Naive thymus-derived CD8-positive, alpha-beta T cell (primary cell): ENCODE measurements at regions of chr12 and their contacts with region 1.

Region 1: GRCh38 chr12:51270067-51270970 is at the start of gene SMAGP:
- DNase-seq: peak in 9 of 10 donors; percentile 25 to 71 (median 47)
- ATAC-seq: peak; percentile 60 to 62
- H3K4me3 Mint-ChIP-seq: peak within 1 kb of the TSS; percentile 87 to 96 (median 94)
- H3K27ac Mint-ChIP-seq: peak within 1 kb of the TSS; percentile 78 to 95 (median 92)
- H3K4me1 Mint-ChIP-seq: peaks cover 19 to 40% (median 30%) of the 10 kb centered on the region in 4 donors
- H3K27me3 Mint-ChIP-seq: no peaks in the 10 kb centered on the region
- polyA plus RNA-seq, gene SMAGP: 15.1 to 18.5 (median 15.6) TPM

Region 2: GRCh38 chr12:50822082-50822481 is 448.2 kb before region 1 on chr12:
- POLR2A ChIA-PET with region 1: no interaction called
- DNase-seq: no peak
- ATAC-seq: no peak
- H3K4me3 Mint-ChIP-seq: no peak overlapping the region
- H3K27ac Mint-ChIP-seq: peak overlapping the region in 2 of 10 donors; percentile 31 to 86
- H3K4me1 Mint-ChIP-seq: peaks cover 0 to 9% (median 8%) of the 10 kb centered on the region in 4 donors
- H3K27me3 Mint-ChIP-seq: no peaks in the 10 kb centered on the region

Region 3: GRCh38 chr12:51341259-51342007 is 71.1 kb after region 1 on chr12:
- POLR2A ChIA-PET with region 1: interaction called, 19 read pairs
- DNase-seq: peak; percentile 33 to 86 (median 69)
- ATAC-seq: peak; percentile 93 to 98
- H3K4me3 Mint-ChIP-seq: peak overlapping the region; percentile 23 to 81 (median 59)
- H3K27ac Mint-ChIP-seq: peak overlapping the region in 9 of 10 donors; percentile 5 to 90 (median 83)
- H3K4me1 Mint-ChIP-seq: peaks cover 11 to 35% (median 18%) of the 10 kb centered on the region in 4 donors
- H3K27me3 Mint-ChIP-seq: no peaks in the 10 kb centered on the region

Region 4: DNA sequence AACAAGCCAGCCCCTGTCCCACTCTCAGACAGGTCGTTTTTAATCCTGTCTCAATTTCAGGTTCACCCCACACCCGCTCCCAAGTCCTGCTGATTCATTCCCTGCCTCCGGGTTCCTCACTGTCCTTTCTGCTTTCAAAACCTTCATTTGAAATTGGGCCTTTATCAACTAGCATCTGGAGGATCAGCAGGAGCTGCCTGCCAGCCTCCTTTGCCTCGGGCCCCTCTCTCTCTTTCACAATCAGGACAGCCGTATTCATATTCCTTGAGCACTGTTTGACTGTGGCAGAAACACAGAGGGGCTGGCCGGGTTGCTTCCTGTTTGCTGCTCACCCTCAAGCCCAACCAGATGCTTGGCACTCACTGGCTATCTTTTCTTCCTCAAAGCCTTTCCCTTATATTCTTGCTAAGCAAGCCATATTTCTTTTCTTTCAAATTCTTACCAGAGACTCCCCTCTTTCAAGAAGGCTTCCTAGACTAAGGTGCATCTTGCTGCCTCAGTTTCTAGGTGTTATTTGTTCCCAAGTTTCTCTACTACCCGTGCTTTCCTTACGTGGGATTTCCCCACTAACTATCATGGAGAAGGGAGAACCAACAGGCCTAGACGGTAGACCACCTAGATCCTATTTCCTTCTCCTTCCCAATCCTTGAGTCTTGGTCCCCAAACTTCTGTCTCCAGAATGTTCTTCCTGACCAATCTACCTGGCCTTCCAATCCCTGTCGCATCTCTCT is 117.9 kb after region 1 on chr12:
- POLR2A ChIA-PET with region 1: no interaction called
- DNase-seq: no peak
- ATAC-seq: no peak
- H3K4me3 Mint-ChIP-seq: peak overlapping the region in 1 of 10 donors; percentile 5
- H3K27ac Mint-ChIP-seq: peak overlapping the region in 6 of 10 donors; percentile 2 to 65 (median 50)
- H3K4me1 Mint-ChIP-seq: peaks cover 34 to 73% (median 69%) of the 10 kb centered on the region in 4 donors
- H3K27me3 Mint-ChIP-seq: peaks cover 0 to 1% (median 0%) of the 10 kb centered on the region in 5 donors